Mucosa of descending colon (tissue), 3 donors: ENCODE measurements at regions of chr2 and their contacts with region 1.

Region 1: DNA sequence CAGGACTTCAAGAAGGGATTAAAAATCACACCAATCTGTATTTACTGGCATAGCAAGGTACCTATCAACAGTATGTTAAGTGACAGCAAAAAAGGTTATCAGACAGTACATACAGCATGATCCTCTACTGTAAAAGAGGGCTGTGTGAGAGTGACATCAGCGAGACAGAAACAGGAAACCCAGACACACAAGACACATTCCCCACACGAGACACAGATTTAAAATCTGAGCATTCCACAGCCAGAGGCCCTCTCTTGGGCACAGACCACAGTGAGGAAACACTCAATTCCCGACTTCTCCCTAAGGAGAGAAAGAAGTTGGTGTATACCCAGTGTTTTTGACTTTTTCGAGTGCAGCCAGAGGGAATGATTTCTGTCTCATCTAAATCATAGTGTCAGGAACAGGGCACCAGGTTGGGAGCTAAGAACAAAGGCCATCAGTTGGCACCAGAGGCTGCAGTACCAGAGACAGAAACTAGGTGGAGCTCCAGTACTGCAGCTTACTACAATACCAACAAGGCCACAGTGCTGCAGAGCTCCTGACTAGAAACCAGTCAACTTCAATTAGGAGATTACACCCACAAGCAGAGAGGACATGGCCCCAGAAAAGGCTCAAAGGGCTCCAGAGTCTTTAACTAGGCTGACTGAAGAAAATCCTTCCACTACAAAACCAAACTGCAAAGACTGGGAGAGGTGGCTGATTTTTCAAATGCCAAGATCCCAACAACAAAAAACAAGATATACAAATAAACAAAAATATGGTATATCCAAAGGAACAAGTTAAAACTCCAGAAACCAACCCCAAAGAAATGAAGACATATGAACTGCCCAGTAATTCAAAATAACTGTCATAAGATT is 41.0 kb downstream of the UNC50 start:
- DNase-seq: peak in 2 of 3 donors; percentile 68 to 95
- ATAC-seq: peak; percentile 98
- H3K4me3 ChIP-seq: no peak overlapping the region
- H3K4me1 ChIP-seq: peaks cover 18% of the 10 kb centered on the region
- CTCF ChIP-seq: peak; percentile 96

Region 2: DNA sequence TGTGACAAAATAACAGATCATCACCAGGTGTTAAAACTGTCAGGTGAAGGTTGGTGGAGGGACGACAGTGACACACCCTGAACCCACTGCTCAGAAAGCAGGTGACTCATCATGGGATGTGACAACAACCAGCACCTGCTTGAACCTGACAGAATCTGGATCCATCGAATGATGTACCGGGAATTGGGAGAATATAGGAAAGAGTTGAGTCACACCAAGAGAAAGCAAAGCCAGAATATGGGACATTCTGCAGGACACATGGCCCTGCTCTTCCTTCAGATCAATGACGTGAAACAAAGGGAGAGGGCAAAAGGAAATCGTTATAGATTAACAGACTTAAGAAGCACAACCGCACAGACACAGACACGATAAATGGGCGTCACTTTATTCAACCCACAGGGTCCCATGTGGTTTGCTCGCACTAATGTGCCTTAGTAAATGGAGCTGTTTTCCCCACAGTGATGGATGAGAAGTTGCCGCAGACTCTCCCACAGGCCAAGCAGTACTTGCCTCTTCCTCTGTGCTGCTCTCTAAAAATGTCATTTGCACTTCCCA is 186.5 kb after region 1 on chr2:
- intact Hi-C with region 1: loop called (anchors 2 kb)
- DNase-seq: no peak
- ATAC-seq: peak; percentile 69
- H3K4me3 ChIP-seq: no peak overlapping the region
- H3K4me1 ChIP-seq: no peaks in the 10 kb centered on the region
- CTCF ChIP-seq: no peak